ENCODE measurements at regions of chr19 and their contacts with region 1.

Region 1: GRCh38 chr19:44890366-44891015 is 563 bp upstream of the TOMM40 start:
- DNase-seq: peak; percentile 100
- H3K4me3 ChIP-seq: peak overlapping the region; percentile 65 to 87
- H3K27ac ChIP-seq: peak overlapping the region; percentile 83
- H3K4me1 ChIP-seq: peaks cover 29% of the 10 kb centered on the region
- H3K27me3 ChIP-seq: no peaks in the 10 kb centered on the region
- CTCF ChIP-seq: no peak
- POLR2A ChIP-seq: peak in 1 of 2 donors; percentile 40

Region 2: DNA sequence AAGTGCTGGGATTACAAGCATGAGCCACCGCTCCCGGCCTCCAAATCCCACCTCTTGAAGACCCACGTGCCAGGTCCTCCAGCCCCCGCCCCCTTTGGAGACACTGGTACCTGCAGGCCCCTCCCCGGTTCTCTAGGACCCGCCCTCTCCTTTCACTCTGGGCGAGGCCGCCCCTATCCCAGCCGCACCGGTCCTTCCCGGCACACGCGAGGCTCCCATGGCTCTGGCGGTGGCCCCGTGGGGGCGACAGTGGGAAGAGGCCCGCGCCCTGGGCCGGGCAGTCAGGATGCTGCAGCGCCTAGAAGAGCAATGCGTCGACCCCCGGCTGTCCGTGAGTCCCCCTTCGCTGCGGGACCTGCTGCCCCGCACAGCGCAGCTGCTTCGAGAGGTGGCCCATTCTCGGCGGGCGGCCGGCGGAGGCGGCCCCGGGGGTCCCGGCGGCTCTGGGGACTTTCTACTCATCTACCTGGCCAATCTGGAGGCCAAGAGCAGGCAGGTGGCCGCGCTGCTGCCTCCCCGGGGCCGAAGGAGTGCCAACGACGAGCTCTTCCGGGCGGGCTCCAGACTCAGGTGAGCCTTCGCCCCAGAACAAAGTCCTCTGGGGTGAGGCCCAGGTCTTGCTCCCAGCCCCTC is 112.7 kb before region 1 on chr19 and contains the start of gene CBLC:
- intact Hi-C with region 1: no loop called
- DNase-seq: no peak
- H3K4me3 ChIP-seq: peak within 1 kb of the TSS; percentile 30 to 48
- H3K27ac ChIP-seq: peak within 1 kb of the TSS; percentile 76
- H3K4me1 ChIP-seq: peaks cover 8% of the 10 kb centered on the region
- H3K27me3 ChIP-seq: no peaks in the 10 kb centered on the region
- CTCF ChIP-seq: no peak
- POLR2A ChIP-seq: no peak
- total RNA-seq, gene CBLC: 42.2 TPM

Region 3: GRCh38 chr19:45092747-45093678 is 202.5 kb after region 1 on chr19 and contains the start of gene PPP1R37:
- intact Hi-C with region 1: loop called (anchors 5 kb)
- DNase-seq: peak in 1 of 2 donors; percentile 95
- H3K4me3 ChIP-seq: peak within 1 kb of the TSS; percentile 74 to 95
- H3K27ac ChIP-seq: peak within 1 kb of the TSS; percentile 85
- H3K4me1 ChIP-seq: peaks cover 55% of the 10 kb centered on the region
- H3K27me3 ChIP-seq: no peaks in the 10 kb centered on the region
- CTCF ChIP-seq: peak in 1 of 3 experiments; percentile 26
- POLR2A ChIP-seq: peak in 1 of 2 donors; percentile 14
- total RNA-seq, gene PPP1R37: 23.8 TPM

Region 4: DNA sequence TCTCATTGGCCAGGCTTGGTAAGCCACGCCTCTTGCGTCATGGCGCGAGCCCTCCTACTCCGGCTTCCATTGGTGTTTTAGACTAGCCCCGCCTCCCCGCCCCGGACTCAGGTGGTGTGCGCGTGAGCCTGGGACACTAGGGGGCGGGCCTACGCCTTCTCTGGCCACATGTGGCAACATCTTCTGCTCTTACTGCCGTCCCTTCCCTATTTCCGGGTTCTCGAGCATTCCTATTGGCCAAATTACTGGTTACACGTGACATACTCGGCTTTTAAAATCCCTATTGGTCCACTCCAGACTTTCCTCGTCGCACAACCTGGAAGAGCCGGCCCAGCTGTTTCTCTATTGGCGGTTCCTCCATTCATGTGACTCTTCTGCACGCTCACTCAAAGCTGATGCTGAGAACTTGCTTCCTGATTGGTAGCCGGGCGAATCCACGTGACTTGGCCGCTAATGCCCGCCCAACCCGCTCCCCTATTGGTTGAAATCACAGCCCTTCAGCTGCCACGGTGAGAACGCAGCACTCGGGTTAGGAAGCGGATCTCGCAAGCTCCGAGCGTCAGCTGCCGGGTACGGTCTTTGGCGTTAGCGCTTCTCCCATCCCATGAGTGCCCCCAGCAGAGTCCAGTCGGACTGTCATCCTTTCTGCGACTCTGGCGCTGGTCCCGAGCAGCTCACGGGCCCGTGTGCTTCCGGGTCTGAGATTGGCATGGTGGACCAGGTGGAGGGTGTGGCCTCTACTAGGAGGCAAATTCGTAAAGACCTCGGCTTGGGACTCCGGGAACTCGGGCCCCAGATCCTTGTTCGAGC is 288.0 kb after region 1 on chr19 and contains the start of gene BLOC1S3:
- intact Hi-C with region 1: loop called (anchors 5 kb)
- DNase-seq: peak; percentile 100
- H3K4me3 ChIP-seq: peak within 1 kb of the TSS; percentile 67 to 89
- H3K27ac ChIP-seq: peak within 1 kb of the TSS; percentile 93
- H3K4me1 ChIP-seq: peaks cover 43% of the 10 kb centered on the region
- H3K27me3 ChIP-seq: no peaks in the 10 kb centered on the region
- CTCF ChIP-seq: peak in 2 of 3 experiments; percentile 13 to 43
- POLR2A ChIP-seq: peak in 1 of 2 donors; percentile 73
- total RNA-seq, gene BLOC1S3: 12.5 TPM